ENCODE measurements at regions of chr5 and their contacts with region 1.

Region 1: DNA sequence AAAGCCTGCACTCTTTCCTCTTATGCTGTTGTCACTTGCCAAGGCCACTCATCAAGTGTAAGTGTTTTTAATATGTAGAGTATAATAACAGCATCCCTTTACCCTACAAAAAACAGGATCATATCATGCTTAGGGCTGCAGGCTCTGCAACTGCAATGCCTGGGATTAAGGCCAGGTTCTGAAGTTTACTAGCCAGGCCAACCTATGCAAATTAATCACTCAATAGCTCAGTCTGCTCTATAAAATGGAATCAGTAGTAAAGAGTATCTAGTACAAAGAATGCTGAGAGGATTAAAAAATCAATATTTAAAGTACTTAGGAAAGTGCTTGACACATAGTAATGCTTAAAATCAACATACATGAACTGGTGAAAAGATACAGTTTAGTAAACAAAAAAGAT is 253.3 kb downstream of the EDIL3 start:
- DNase-seq: peak; percentile 50
- ATAC-seq: peak; percentile 90
- H3K4me3 ChIP-seq: no peak overlapping the region
- H3K27ac ChIP-seq: peak overlapping the region; percentile 25; the same call in 1 of the 2 replicates
- H3K4me1 ChIP-seq: peaks cover 24% of the 10 kb centered on the region
- H3K27me3 ChIP-seq: no peaks in the 10 kb centered on the region
- CTCF ChIP-seq: no peak

Region 2: DNA sequence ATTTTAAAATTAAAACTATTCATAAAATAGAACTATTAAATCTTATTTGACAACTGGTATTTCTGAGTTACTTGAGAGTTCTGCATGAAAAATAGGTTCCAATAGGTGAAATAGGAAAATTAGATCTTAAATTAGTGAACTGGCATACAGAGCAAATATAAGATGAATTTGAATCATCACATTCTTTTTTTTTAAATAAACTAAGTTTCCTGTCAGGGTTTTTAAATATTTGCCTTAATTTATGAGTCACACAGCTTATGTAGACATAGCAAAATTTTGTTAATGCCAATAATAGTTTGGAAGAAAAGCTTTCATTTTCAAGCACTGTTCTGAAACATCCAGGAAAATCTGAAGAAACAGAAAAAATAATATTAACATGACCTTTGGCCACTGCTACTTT is 99.0 kb before region 1 on chr5:
- CTCF ChIA-PET with region 1: no interaction called
- POLR2A ChIA-PET with region 1: no interaction called
- intact Hi-C with region 1: loop called (anchors 5 kb)
- DNase-seq: peak; percentile 68
- ATAC-seq: peak; percentile 82
- H3K4me3 ChIP-seq: no peak overlapping the region
- H3K27ac ChIP-seq: peak overlapping the region; percentile 90
- H3K4me1 ChIP-seq: peaks cover 34% of the 10 kb centered on the region
- H3K27me3 ChIP-seq: no peaks in the 10 kb centered on the region
- CTCF ChIP-seq: no peak

Region 3: DNA sequence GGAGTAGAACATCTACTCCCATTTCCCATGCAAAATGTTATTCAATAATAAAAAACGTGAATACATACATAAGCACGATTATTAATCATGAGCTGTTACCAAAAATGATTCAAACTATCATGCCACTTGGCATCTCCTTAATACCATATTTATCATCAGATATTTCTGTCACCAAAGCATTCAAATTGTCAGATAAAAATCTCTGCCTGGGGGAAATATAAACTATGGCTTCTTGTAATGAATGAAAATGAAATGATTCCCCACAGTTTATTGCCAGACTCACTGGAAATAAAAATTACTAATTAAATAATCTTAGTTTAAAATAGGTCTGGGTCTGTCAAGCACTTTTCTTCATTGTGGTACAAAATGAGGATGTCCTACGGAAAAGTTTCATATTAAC is 12.1 kb before region 1 on chr5:
- CTCF ChIA-PET with region 1: no interaction called
- POLR2A ChIA-PET with region 1: no interaction called
- intact Hi-C with region 1: no loop called
- DNase-seq: peak; percentile 74
- ATAC-seq: peak; percentile 74
- H3K4me3 ChIP-seq: no peak overlapping the region
- H3K27ac ChIP-seq: peak overlapping the region; percentile 51
- H3K4me1 ChIP-seq: peaks cover 28% of the 10 kb centered on the region
- H3K27me3 ChIP-seq: no peaks in the 10 kb centered on the region
- CTCF ChIP-seq: no peak

Region 4: DNA sequence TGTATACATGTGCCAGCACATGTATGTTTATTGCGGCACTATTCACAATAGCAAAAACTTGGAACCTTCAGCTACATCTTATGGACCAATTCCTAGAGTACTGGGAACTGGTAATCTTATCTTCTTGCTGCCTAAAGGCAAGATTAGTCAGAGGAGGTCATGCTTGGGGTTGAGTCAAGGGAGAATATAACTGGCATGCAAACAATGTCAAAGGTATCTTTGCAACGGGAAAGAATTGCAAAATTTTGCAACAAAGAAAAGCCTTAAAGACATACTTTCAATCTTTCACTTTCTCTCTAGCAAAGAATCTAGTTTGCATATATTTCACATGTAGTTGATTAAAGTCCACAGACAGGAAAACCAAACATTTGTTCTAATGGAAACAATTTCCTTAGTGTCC is 108.1 kb after region 1 on chr5:
- CTCF ChIA-PET with region 1: no interaction called
- POLR2A ChIA-PET with region 1: no interaction called
- intact Hi-C with region 1: loop called (anchors 2 kb)
- DNase-seq: peak; percentile 73
- ATAC-seq: peak; percentile 80
- H3K4me3 ChIP-seq: peak overlapping the region; percentile 32; the same call in 1 of the 2 replicates
- H3K27ac ChIP-seq: peak overlapping the region; percentile 33; the same call in 1 of the 2 replicates
- H3K4me1 ChIP-seq: peaks cover 40% of the 10 kb centered on the region
- H3K27me3 ChIP-seq: no peaks in the 10 kb centered on the region
- CTCF ChIP-seq: no peak

Region 5: GRCh38 chr5:84249918-84250630 is 118.7 kb after region 1 on chr5:
- CTCF ChIA-PET with region 1: no interaction called
- POLR2A ChIA-PET with region 1: no interaction called
- intact Hi-C with region 1: loop called (anchors 2 kb)
- DNase-seq: peak; percentile 84
- ATAC-seq: peak; percentile 76
- H3K4me3 ChIP-seq: peak overlapping the region; percentile 47; the same call in 1 of the 2 replicates
- H3K27ac ChIP-seq: peak overlapping the region; percentile 58
- H3K4me1 ChIP-seq: peaks cover 54% of the 10 kb centered on the region
- H3K27me3 ChIP-seq: no peaks in the 10 kb centered on the region
- CTCF ChIP-seq: no peak

Region 6: GRCh38 chr5:84322646-84323045 is 191.3 kb after region 1 on chr5:
- CTCF ChIA-PET with region 1: no interaction called
- POLR2A ChIA-PET with region 1: no interaction called
- intact Hi-C with region 1: no loop called
- DNase-seq: no peak
- ATAC-seq: no peak
- H3K4me3 ChIP-seq: no peak overlapping the region
- H3K27ac ChIP-seq: no peak overlapping the region
- H3K4me1 ChIP-seq: no peaks in the 10 kb centered on the region
- H3K27me3 ChIP-seq: no peaks in the 10 kb centered on the region
- CTCF ChIP-seq: no peak